Right cardiac atrium (tissue), 5 donors: ENCODE measurements at regions of chr1 and their contacts with region 1.

Region 1: GRCh38 chr1:2443277-2444137 is 31.1 kb upstream of the PEX10 start:
- DNase-seq: no peak
- ATAC-seq: no peak
- H3K4me3 ChIP-seq: no peak overlapping the region
- H3K27ac ChIP-seq: no peak overlapping the region
- H3K4me1 ChIP-seq: no peaks in the 10 kb centered on the region
- H3K27me3 ChIP-seq: no peaks in the 10 kb centered on the region

Region 2: DNA sequence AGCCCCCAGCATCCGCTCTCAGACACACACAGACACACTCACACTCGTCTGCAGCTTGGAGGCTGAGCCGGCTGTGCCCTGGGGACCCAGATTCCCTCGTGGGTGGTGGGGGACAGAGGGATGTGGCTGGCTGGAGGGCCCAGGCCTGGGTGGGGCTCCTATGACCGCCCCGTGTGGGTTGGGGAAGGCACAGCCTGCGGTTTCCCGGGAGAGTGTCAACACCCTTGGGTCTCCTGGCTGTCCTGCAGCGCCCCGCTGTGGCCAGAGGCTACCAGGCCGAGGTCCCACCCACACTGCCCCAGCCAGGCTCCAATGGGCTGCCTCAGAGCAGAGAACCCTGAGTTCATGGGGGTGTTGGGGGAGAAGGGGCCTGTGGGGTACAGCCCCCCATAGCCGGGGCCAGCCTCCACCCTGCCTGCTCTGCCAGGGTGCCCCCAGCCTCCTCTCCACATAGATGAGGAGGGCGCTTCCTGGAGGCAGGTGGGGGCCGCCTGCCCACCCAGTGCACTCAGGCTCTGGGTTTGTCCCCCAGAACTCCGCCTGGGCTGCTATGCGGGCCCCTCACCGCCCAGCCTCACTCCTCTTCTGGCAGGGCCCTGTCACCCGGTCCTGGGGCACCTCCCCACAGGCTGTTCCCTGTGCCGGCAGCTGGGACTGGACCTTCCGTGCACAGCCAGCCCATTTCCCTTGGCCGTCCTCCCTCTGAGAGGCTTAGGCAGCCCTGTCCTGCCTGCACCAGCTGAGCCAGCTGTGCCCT is 358.2 kb after region 1 on chr1 and contains the start of gene TTC34:
- intact Hi-C with region 1: loop called in 1 of 4 experiments (anchors 10 kb)
- DNase-seq: peak in 2 of 3 donors; percentile 29 to 52
- ATAC-seq: peak in 1 of 2 donors; percentile 39
- H3K4me3 ChIP-seq: no peak within 1 kb of the TSS
- H3K27ac ChIP-seq: no peak within 1 kb of the TSS
- H3K4me1 ChIP-seq: no peaks in the 10 kb centered on the region
- H3K27me3 ChIP-seq: no peaks in the 10 kb centered on the region
- total RNA-seq, gene TTC34: 0.53 to 1.5 (median 0.94) TPM